ENCODE measurements at regions of chr3 and their contacts with region 1.

Region 1: GRCh38 chr3:182740710-182741109 is 52.6 kb upstream of the ATP11B start:
- DNase-seq: peak in 1 of 2 donors; percentile 15
- H3K4me3 ChIP-seq: no peak overlapping the region
- CTCF ChIP-seq: no peak
- POLR2A ChIP-seq: no peak

Region 2: DNA sequence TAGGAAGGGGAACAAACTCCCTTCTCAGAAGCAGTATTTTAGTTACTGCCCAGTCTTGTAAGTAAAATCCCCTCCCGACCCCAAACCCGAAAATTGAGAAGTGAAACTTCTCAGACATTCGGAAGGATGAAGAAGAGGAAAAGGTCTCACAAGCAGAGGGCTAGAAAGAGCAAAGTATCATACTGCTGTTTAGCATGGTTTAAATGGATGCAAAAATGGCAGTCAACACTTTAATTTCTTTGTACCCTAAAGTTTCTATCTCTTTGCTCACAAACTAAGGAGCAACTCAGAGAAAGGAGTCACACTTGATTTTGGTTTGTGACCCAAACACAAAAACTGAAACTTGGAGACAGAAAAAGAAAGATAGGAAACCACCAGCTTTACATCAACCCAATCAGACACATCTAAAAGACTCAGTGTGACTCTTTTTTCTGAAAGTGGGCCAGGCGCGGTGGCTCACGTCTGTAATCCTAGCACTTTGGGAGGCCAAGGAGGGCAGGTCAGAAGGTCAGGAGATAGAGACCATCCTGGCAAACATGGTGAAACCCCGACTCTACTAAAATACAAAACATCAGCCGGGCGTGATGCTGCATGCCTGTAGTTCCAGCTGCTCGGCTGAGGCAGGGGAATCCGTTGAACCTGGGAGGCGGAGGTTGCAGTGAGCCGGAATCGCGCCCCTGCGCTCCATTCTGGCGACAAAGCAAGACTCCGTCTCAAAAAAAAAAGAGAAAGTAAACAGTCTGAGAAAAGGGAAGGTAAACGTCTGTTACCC is 10.6 kb before region 1 on chr3:
- intact Hi-C with region 1: loop called (anchors 2 kb)
- DNase-seq: no peak
- H3K4me3 ChIP-seq: no peak overlapping the region
- CTCF ChIP-seq: no peak
- POLR2A ChIP-seq: no peak

Region 3: DNA sequence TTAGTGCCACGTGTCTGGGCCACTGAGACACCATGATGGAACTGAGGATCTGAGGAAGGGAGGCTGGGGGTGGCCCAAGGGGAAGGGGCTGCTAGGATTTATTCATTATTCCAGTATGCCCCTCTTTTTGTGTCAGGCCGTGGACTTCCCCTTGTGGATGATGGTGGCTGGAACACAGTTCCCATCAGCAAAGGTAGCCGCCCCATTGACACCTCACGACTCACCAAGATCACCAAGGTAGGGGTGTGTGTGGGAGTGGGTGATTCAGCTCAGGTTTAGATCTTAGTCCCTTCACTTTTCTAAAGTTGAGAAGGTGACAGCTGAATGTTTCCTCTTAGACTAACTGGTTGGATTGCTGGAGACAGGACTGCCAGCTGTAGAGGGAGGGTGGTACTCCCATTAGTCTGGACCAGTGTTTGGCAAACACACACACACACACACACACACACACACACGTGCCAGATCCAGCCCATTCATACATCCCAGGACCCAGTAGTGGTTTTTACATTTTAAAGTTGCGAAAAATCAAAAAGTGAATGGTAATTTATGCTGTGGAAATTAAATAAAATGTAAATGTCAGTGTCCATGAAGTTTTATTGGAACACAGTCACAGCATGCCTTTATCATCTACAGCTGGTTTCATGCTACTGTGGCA is 1585.1 kb after region 1 on chr3:
- intact Hi-C with region 1: loop called (anchors 5 kb)
- DNase-seq: no peak
- H3K4me3 ChIP-seq: no peak overlapping the region
- CTCF ChIP-seq: no peak
- POLR2A ChIP-seq: no peak

Measured in lower leg skin (tissue), 4 donors.